ENCODE measurements at regions of chr5 and their contacts with region 1.

Region 1: DNA sequence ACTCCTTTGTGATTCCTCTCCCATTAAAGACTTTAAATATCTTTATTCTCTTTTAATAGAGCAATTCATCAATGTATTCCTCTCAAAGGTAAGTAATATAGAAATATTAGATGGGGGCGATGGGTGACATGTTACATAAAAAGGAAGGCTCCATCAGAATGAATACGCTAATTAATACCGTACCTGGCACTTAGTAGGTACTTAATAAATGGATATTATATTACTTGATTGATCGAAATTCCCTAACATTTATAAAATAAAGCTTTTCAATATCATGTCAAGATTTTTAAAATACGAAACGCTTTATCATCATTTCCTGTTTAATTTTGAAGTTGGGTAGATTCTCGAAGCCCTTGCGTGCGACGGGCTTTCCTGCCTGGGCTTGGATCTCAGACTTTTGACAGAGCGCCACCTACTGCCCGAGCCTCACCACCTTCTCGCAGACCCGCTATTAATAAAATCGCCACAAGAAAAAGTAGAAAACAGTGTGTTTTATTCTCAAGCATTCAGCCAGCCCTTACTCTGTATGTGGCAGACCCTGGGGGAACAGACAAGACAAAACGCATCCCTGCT is 99.4 kb downstream of the C5orf15 start:
- DNase-seq: peak; percentile 81 to 83 (median 81)
- ATAC-seq: peak; percentile 79
- H3K4me3 ChIP-seq: no peak overlapping the region
- H3K27ac ChIP-seq: no peak overlapping the region
- H3K4me1 ChIP-seq: no peaks in the 10 kb centered on the region
- H3K27me3 ChIP-seq: no peaks in the 10 kb centered on the region
- CTCF ChIP-seq: peak; percentile 72 to 88 (median 82)
- POLR2A ChIP-seq: no peak

Region 2: GRCh38 chr5:133265720-133266526 is 603.1 kb before region 1 on chr5:
- intact Hi-C with region 1: no loop called
- DNase-seq: no peak
- ATAC-seq: no peak
- H3K4me3 ChIP-seq: no peak overlapping the region
- H3K27ac ChIP-seq: no peak overlapping the region
- H3K4me1 ChIP-seq: peaks cover 13% of the 10 kb centered on the region
- H3K27me3 ChIP-seq: no peaks in the 10 kb centered on the region
- CTCF ChIP-seq: no peak
- POLR2A ChIP-seq: no peak

Region 3: GRCh38 chr5:133423618-133424282 is 445.3 kb before region 1 on chr5:
- intact Hi-C with region 1: loop called (anchors 10 kb)
- DNase-seq: peak; percentile 58 to 75 (median 72)
- ATAC-seq: peak; percentile 83
- H3K4me3 ChIP-seq: no peak overlapping the region
- H3K27ac ChIP-seq: no peak overlapping the region
- H3K4me1 ChIP-seq: peaks cover 4% of the 10 kb centered on the region
- H3K27me3 ChIP-seq: no peaks in the 10 kb centered on the region
- CTCF ChIP-seq: peak; percentile 84 to 96 (median 89)
- POLR2A ChIP-seq: no peak

Region 4: DNA sequence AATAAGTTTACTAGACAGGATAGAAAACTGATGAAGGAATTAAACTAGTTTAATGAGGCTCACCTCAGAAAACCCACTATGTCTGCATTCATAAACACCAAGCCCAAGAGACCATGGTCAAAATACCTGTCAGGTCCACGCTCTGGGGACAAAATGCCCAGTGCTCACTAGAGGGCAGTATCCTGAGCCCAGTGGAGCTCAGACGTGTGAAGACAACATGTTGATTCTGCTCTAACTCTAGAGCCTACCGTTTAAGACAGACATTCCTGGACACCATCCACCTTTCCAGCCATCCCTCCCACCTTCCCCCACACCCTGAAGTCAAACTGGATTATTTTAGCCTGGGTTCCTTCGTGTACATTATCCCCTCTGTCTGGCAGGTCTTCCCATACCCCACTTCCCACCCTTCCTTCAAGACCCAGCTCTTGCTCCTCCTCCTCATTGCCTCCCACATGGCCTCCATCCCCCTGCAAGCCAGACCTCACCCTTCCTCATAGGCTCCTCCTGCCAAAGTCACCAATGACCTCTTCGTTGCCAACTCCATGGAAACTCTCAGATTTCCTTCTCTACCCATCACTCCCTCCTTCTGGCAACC is 114.4 kb before region 1 on chr5:
- intact Hi-C with region 1: loop called (anchors 10 kb)
- DNase-seq: peak; percentile 50 to 56 (median 56)
- ATAC-seq: peak; percentile 45
- H3K4me3 ChIP-seq: no peak overlapping the region
- H3K27ac ChIP-seq: no peak overlapping the region
- H3K4me1 ChIP-seq: no peaks in the 10 kb centered on the region
- H3K27me3 ChIP-seq: no peaks in the 10 kb centered on the region
- CTCF ChIP-seq: peak; percentile 50 to 70 (median 66)
- POLR2A ChIP-seq: no peak

Measured in body of pancreas (tissue), 4 donors.